ENCODE measurements at regions of chr12 and their contacts with region 1.

Region 1: GRCh38 chr12:55973598-55974307 is at the start of gene RAB5B:
- DNase-seq: peak; percentile 94 to 100 (median 97)
- ATAC-seq: peak; percentile 87
- H3K4me3 ChIP-seq: peak within 1 kb of the TSS; percentile 81 to 84
- H3K4me3 Mint-ChIP-seq: no peak within 1 kb of the TSS
- H3K27ac ChIP-seq: peak within 1 kb of the TSS; percentile 76 to 90
- H3K27ac Mint-ChIP-seq: no peak within 1 kb of the TSS
- H3K4me1 ChIP-seq: peaks cover 18% of the 10 kb centered on the region
- H3K4me1 Mint-ChIP-seq: peaks cover 27% of the 10 kb centered on the region
- H3K27me3 ChIP-seq: no peaks in the 10 kb centered on the region
- H3K27me3 Mint-ChIP-seq: no peaks in the 10 kb centered on the region
- CTCF ChIP-seq: no peak
- total RNA-seq, gene RAB5B: 16.1 to 16.8 TPM

Region 2: GRCh38 chr12:55250944-55251343 is 722.8 kb before region 1 on chr12:
- CTCF ChIA-PET with region 1: no interaction called
- POLR2A ChIA-PET with region 1: no interaction called
- intact Hi-C with region 1: no loop called
- DNase-seq: no peak
- ATAC-seq: no peak
- H3K4me3 ChIP-seq: no peak overlapping the region
- H3K4me3 Mint-ChIP-seq: no peak overlapping the region
- H3K27ac ChIP-seq: no peak overlapping the region
- H3K27ac Mint-ChIP-seq: no peak overlapping the region
- H3K4me1 ChIP-seq: no peaks in the 10 kb centered on the region
- H3K4me1 Mint-ChIP-seq: no peaks in the 10 kb centered on the region
- H3K27me3 ChIP-seq: peaks cover 0 to 2% of the 10 kb centered on the region in 2 experiments
- H3K27me3 Mint-ChIP-seq: peaks cover 14% of the 10 kb centered on the region
- CTCF ChIP-seq: no peak

Region 3: GRCh38 chr12:55829967-55830600 is 143.7 kb before region 1 on chr12:
- CTCF ChIA-PET with region 1: no interaction called
- POLR2A ChIA-PET with region 1: interaction called, 24 read pairs
- intact Hi-C with region 1: loop called in 1 of 2 experiments (anchors 1 kb)
- DNase-seq: peak in 7 of 9 experiments; percentile 15 to 63 (median 48)
- ATAC-seq: peak; percentile 16
- H3K4me3 ChIP-seq: peak overlapping the region; percentile 65 to 93
- H3K4me3 Mint-ChIP-seq: peak overlapping the region; percentile 99
- H3K27ac ChIP-seq: peak overlapping the region; percentile 71 to 79
- H3K27ac Mint-ChIP-seq: peak overlapping the region; percentile 95
- H3K4me1 ChIP-seq: peaks cover 45% of the 10 kb centered on the region
- H3K4me1 Mint-ChIP-seq: peaks cover 56% of the 10 kb centered on the region
- H3K27me3 ChIP-seq: no peaks in the 10 kb centered on the region
- H3K27me3 Mint-ChIP-seq: no peaks in the 10 kb centered on the region
- CTCF ChIP-seq: no peak

Region 4: DNA sequence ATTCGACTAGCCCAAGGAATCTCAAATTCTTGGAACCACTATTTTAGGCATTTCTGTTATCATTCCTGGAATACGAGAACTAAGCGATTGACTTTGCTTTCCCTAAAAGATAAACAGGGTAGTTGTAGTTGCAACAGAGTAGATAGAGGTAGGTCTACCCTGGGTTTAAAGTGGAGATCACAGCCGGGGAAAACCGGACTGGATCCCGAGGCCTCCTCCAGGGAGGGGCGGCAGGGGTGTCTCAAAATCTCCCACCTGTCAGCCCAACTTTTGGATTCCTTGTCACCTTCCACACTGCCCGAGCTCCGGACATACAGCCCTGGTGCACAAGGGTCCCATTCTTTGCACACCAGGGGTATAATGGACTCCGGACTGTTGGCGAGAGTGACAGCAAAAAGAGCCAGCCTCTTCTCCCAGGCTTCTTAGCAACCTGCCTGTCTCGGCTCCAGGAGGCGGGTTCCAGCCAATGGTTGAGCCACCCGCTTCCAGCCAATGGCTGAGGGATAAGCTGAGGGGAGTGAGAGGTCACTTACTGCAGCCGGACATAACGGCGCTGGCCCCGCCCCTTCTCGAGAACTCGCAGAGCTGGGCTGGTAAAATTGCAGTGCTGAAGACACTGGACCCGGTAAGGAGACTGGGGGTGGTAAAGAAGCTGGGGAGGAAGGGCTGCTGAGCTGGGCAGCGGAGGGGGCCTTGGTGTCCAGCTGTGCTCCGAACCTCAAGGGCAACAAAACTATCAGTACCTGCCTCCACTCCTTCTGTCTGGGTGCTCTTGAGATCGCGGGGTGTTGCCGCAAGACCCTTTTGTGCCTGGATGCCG is 23.2 kb after region 1 on chr12 and contains the start of gene SUOX:
- CTCF ChIA-PET with region 1: interaction called, 6 read pairs
- POLR2A ChIA-PET with region 1: interaction called, 13 read pairs
- intact Hi-C with region 1: no loop called
- DNase-seq: peak in 6 of 9 experiments; percentile 7 to 52 (median 26)
- ATAC-seq: no peak
- H3K4me3 ChIP-seq: peak within 1 kb of the TSS; percentile 14 to 34
- H3K4me3 Mint-ChIP-seq: peak within 1 kb of the TSS; percentile 66
- H3K27ac ChIP-seq: no peak within 1 kb of the TSS
- H3K27ac Mint-ChIP-seq: no peak within 1 kb of the TSS
- H3K4me1 ChIP-seq: peaks cover 14% of the 10 kb centered on the region
- H3K4me1 Mint-ChIP-seq: peaks cover 23% of the 10 kb centered on the region
- H3K27me3 ChIP-seq: peaks cover 0 to 12% of the 10 kb centered on the region in 2 experiments
- H3K27me3 Mint-ChIP-seq: peaks cover 6% of the 10 kb centered on the region
- CTCF ChIP-seq: no peak
- total RNA-seq, gene SUOX: 0.72 to 1.2 TPM

Region 5: GRCh38 chr12:56104109-56104814 is 130.5 kb after region 1 on chr12 and contains the start of gene PA2G4:
- CTCF ChIA-PET with region 1: no interaction called
- POLR2A ChIA-PET with region 1: interaction called, 18 read pairs
- intact Hi-C with region 1: loop called in 1 of 2 experiments (anchors 1 kb)
- DNase-seq: peak; percentile 91 to 99 (median 96)
- ATAC-seq: peak; percentile 88
- H3K4me3 ChIP-seq: peak within 1 kb of the TSS; percentile 90
- H3K4me3 Mint-ChIP-seq: peak within 1 kb of the TSS; percentile 99
- H3K27ac ChIP-seq: peak within 1 kb of the TSS; percentile 53 to 70
- H3K27ac Mint-ChIP-seq: peak within 1 kb of the TSS; percentile 98
- H3K4me1 ChIP-seq: peaks cover 37% of the 10 kb centered on the region
- H3K4me1 Mint-ChIP-seq: peaks cover 66% of the 10 kb centered on the region
- H3K27me3 ChIP-seq: no peaks in the 10 kb centered on the region
- H3K27me3 Mint-ChIP-seq: no peaks in the 10 kb centered on the region
- CTCF ChIP-seq: no peak
- total RNA-seq, gene PA2G4: 61.6 to 62.4 TPM

Region 6: DNA sequence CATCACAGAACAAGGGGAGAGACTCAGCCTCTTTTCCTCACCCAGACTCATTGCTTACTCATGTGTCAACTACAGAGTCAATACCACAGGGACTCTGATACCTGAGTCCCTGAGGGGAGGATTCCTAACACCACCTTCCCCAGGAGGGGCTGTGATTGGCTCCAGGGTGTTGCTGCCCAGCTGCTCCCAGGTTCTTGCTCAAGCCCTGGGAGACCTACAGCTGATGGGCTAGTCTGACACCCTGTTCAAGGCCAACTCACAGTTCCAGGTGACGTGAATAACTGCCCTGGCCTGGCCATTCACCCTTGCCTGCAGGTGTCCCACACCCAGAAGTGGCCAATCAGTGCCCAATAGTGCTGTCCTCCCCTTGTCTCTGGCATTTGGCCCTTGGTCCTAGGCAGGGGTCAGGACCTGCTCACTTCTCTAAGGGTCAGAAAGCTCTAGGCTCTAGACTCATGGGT is 503.2 kb after region 1 on chr12:
- CTCF ChIA-PET with region 1: no interaction called
- POLR2A ChIA-PET with region 1: no interaction called
- intact Hi-C with region 1: loop called in 1 of 2 experiments (anchors 10 kb)
- DNase-seq: no peak
- ATAC-seq: no peak
- H3K4me3 ChIP-seq: no peak overlapping the region
- H3K4me3 Mint-ChIP-seq: no peak overlapping the region
- H3K27ac ChIP-seq: no peak overlapping the region
- H3K27ac Mint-ChIP-seq: no peak overlapping the region
- H3K4me1 ChIP-seq: no peaks in the 10 kb centered on the region
- H3K4me1 Mint-ChIP-seq: no peaks in the 10 kb centered on the region
- H3K27me3 ChIP-seq: no peaks in the 10 kb centered on the region
- H3K27me3 Mint-ChIP-seq: no peaks in the 10 kb centered on the region
- CTCF ChIP-seq: no peak